ENCODE measurements at regions of chr2 and their contacts with region 1.

Region 1: DNA sequence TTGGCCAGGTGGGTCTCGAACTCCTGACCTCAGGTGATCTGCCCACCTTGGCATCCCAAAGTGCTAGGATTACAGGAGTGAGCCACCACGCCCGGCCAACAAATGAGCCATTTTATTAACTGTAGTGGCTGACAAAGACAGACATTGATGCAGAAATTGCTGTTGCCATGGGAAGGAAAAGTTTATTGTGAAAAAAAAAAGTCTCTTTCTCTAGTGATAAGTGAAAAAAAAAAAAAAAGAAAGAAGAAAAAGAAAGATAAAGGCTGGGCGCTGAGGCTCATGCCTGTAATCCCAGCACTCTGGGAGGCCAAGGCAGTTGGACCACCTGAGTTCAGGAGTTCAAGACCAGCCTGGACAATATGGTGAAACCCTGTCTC is 39.8 kb upstream of the RAB1A start:
- DNase-seq: no peak
- ATAC-seq: no peak
- H3K4me3 ChIP-seq: no peak overlapping the region
- H3K27ac ChIP-seq: no peak overlapping the region
- H3K4me1 ChIP-seq: no peaks in the 10 kb centered on the region; the same call in 1 of the 2 replicates
- H3K27me3 ChIP-seq: no peaks in the 10 kb centered on the region
- CTCF ChIP-seq: no peak
- EP300 ChIP-seq: no peak
- POLR2A ChIP-seq: no peak
- RAD21 ChIP-seq: no peak

Region 2: DNA sequence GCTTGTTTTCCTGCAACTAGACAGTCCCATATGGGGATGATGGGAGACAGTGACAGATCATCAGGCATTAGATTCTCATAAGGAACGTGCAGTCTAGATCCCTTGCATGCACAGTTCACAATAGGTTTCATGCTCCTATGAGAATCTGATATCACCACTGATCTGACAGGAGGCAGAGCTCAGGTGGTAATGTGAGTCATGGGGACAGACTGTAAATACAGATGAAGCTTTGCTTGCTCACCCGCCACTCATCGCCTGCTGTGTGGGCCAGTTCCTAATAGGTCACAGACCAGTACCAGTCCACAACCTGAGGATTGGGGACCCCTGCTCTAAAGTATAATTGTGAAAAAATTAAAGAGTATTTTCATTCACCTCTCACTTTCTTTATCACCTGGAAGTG is 16.2 kb before region 1 on chr2:
- CTCF ChIA-PET with region 1: interaction called, 20 read pairs
- POLR2A ChIA-PET with region 1: no interaction called
- RAD21 ChIA-PET with region 1: interaction called, 3 read pairs
- SMC1A ChIA-PET with region 1: interaction called, 7 read pairs
- in situ Hi-C with region 1: no loop called
- intact Hi-C with region 1: no loop called
- DNase-seq: no peak
- ATAC-seq: no peak
- H3K4me3 ChIP-seq: no peak overlapping the region
- H3K27ac ChIP-seq: no peak overlapping the region
- H3K4me1 ChIP-seq: no peaks in the 10 kb centered on the region
- H3K27me3 ChIP-seq: no peaks in the 10 kb centered on the region
- CTCF ChIP-seq: no peak
- EP300 ChIP-seq: no peak
- POLR2A ChIP-seq: no peak
- RAD21 ChIP-seq: no peak

Measured in GM12878 (cell line).